ENCODE measurements at regions of chr7 and their contacts with region 1.

Region 1: GRCh38 chr7:106736508-106737201 is 75.7 kb upstream of the CCDC71L start:
- DNase-seq: no peak

Region 2: GRCh38 chr7:106187613-106188350 is 548.9 kb before region 1 on chr7:
- intact Hi-C with region 1: loop called in 1 of 2 experiments (anchors 10 kb)
- DNase-seq: no peak

Region 3: GRCh38 chr7:106659963-106660861 is 76.4 kb before region 1 on chr7:
- intact Hi-C with region 1: loop called (anchors 5 kb)
- DNase-seq: peak; percentile 94